ENCODE measurements at regions of chr9 and their contacts with region 1.

Region 1: GRCh38 chr9:93134015-93134739 is at the start of gene NINJ1:
- DNase-seq: peak; percentile 63
- H3K4me3 ChIP-seq: peak within 1 kb of the TSS; percentile 77 to 89
- H3K27ac ChIP-seq: peak within 1 kb of the TSS; percentile 93 to 97
- H3K4me1 ChIP-seq: peaks cover 38% of the 10 kb centered on the region
- H3K27me3 ChIP-seq: no peaks in the 10 kb centered on the region
- CTCF ChIP-seq: peak in 1 of 4 experiments; percentile 26
- POLR2A ChIP-seq: peak; percentile 88
- total RNA-seq, gene NINJ1: 139 to 183 TPM

Region 2: DNA sequence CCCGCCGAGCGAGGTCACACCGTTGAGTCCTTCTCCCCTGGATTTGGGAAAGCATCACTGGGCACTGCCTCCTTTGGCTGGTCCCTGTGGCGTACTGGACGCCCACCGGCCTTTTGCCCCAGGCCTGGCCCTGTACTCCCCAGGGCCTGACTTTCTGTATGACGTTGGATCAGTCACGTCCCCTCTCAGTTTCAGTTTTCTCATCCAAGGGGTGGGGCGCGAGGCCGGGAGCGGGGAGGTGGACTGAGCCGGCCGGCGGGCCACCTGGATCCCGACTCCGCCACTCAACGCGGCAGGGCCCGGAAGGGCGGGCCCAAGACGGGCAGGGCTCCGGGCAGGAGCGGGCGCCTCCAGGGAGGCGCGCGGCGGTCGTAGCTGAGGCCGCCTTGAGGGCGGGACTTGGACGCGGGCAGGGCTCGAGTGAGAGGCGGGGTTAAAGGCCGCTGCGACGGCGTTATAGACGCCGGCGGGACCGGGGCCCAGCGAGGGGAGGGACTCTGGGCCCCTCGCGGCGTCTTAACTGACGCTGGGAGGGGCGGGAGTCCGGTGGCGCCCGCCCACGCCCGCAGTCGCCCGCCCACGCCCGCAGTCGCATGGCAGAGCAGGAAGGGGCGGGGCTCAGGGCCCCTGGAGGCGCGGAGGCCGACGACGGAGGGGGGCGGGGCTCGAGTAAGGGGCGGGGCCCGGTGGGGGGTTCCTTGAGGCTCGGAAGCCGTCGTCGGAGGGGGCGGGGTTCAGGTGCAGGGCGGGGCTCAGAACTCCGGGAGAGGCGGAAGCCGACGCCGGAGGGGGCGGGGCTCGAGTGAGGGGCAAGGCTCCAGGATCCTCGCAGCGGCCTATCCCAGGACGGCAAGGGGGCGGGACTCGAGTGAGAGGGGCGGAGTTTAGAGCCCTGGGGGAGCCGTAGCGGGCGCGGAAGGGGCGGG is 38.7 kb before region 1 on chr9:
- intact Hi-C with region 1: loop called (anchors 5 kb)
- DNase-seq: peak; percentile 100
- H3K4me3 ChIP-seq: peak overlapping the region; percentile 98 to 99
- H3K27ac ChIP-seq: peak overlapping the region; percentile 94 to 95
- H3K4me1 ChIP-seq: peaks cover 11% of the 10 kb centered on the region
- H3K27me3 ChIP-seq: no peaks in the 10 kb centered on the region
- CTCF ChIP-seq: peak in 2 of 4 experiments; percentile 14 to 21
- POLR2A ChIP-seq: peak; percentile 76

Region 3: DNA sequence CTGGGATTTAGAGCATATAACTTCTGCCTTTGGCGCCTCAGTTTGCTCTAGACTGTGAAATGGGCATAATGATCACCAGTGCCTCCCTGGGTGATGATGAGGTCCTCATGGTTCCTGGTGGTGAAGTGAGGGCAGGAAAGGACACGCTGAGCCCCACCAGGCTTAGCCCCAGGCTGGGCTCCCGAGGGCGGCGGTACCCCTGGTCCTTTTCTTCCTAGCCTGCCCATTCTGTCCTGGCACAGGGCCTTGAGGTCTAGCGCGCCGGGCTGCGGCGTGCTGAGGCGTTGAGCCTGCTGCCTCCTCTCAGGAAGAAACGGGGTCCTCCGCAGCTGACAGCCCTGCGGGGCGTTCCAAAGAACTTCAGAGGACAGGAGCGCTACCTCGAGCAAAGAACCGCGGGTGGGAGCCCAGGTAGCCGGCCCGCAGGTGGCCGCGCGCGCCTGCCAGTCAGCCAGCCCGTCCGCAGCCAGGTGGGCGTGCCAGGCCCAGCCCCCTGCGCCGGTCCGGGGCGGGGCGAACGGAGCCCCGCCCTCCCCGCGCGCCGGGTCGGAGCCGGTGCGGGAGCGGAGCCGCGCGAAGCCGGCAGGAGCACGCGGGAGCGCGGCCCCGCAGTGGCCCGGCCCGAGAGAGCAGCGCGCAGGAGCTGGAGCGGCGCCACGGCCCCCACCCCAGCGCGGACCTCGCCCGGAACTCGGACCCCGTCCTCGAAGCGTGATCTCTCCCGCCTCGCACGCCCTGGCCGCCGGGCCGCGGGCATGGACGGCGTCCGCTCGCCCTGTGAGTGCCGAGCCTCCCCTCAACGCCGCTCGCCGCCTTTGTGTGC is 49.6 kb after region 1 on chr9 and contains the start of gene WNK2:
- intact Hi-C with region 1: loop called (anchors 5 kb)
- DNase-seq: peak; percentile 45
- H3K4me3 ChIP-seq: peak within 1 kb of the TSS; percentile 45 to 69
- H3K27ac ChIP-seq: peak within 1 kb of the TSS; percentile 34 to 62
- H3K4me1 ChIP-seq: peaks cover 18% of the 10 kb centered on the region
- H3K27me3 ChIP-seq: no peaks in the 10 kb centered on the region
- CTCF ChIP-seq: no peak
- POLR2A ChIP-seq: peak; percentile 47
- total RNA-seq, gene WNK2: 77.9 to 136 TPM

Region 4: GRCh38 chr9:93453047-93453914 is 319.1 kb after region 1 on chr9 and contains the start of gene FAM120AOS:
- intact Hi-C with region 1: loop called (anchors 10 kb)
- DNase-seq: peak; percentile 96
- H3K4me3 ChIP-seq: peak within 1 kb of the TSS; percentile 79 to 84
- H3K27ac ChIP-seq: peak within 1 kb of the TSS; percentile 91 to 95
- H3K4me1 ChIP-seq: peaks cover 18% of the 10 kb centered on the region
- H3K27me3 ChIP-seq: no peaks in the 10 kb centered on the region
- CTCF ChIP-seq: no peak
- POLR2A ChIP-seq: peak; percentile 80
- total RNA-seq, gene FAM120AOS: 60.7 to 83.8 TPM